ENCODE measurements at regions of chr6 and their contacts with region 1.

Region 1: GRCh38 chr6:84227434-84228197 is at the start of gene CEP162:
- DNase-seq: peak; percentile 96
- ATAC-seq: peak; percentile 97
- H3K4me3 Mint-ChIP-seq: peak within 1 kb of the TSS; percentile 82
- H3K27ac Mint-ChIP-seq: peak within 1 kb of the TSS; percentile 93
- H3K4me1 Mint-ChIP-seq: peaks cover 16% of the 10 kb centered on the region
- H3K27me3 Mint-ChIP-seq: peaks cover 5% of the 10 kb centered on the region
- CTCF ChIP-seq: peak; percentile 67
- total RNA-seq, gene CEP162: 4.9 to 5.4 TPM

Region 2: DNA sequence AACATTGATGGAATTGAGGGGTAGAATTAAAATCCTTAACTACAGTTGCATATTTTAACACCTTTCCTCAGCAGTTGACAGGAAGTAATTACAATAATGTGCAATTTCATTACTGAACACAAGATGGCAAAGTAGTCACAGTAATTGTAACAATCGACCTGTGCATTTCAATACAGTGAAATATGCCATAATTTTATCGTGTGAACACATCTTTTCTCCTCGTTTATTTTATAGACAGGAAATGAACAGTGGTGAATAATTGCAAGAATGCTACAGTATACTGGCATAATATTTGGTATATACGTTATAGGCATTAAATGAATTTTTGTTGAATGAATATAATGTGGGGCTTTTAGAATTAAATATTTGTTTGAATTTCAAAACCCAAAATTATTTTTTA is 343.1 kb before region 1 on chr6:
- CTCF ChIA-PET with region 1: interaction called, 7 read pairs
- POLR2A ChIA-PET with region 1: no interaction called
- intact Hi-C with region 1: loop called (anchors 5 kb)
- DNase-seq: no peak
- ATAC-seq: peak; percentile 86
- H3K4me3 Mint-ChIP-seq: no peak overlapping the region
- H3K27ac Mint-ChIP-seq: no peak overlapping the region
- H3K4me1 Mint-ChIP-seq: peaks cover 7% of the 10 kb centered on the region
- H3K27me3 Mint-ChIP-seq: no peaks in the 10 kb centered on the region
- CTCF ChIP-seq: peak; percentile 75

Region 3: GRCh38 chr6:84137051-84137375 is 90.6 kb before region 1 on chr6:
- CTCF ChIA-PET with region 1: no interaction called
- POLR2A ChIA-PET with region 1: no interaction called
- intact Hi-C with region 1: no loop called
- DNase-seq: no peak
- ATAC-seq: no peak
- H3K4me3 Mint-ChIP-seq: no peak overlapping the region
- H3K27ac Mint-ChIP-seq: no peak overlapping the region
- H3K4me1 Mint-ChIP-seq: peaks cover 2% of the 10 kb centered on the region
- H3K27me3 Mint-ChIP-seq: no peaks in the 10 kb centered on the region
- CTCF ChIP-seq: no peak